ENCODE measurements at regions of chr7 and their contacts with region 1.

Region 1: DNA sequence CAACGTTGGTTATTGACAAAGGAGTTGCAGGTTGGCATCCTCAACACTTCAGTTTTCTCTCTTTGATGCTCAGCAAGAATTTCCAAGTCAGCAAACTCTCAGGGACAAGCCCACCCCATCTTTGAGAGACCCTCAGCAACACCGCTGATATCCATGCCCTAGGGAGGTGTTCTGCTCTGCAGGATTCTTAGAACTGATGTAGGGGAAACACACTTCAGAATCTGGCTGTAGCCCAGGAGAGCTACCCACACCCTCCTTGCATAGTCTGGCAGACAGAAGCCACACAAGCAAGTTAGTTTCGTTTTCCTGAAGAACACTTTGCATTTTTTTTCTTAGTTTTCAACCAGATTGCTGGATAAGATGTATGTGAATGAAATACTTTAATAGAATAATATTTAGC is 822 bp downstream of the SAMD9L start:
- DNase-seq: peak in 8 of 9 donors; percentile 30 to 51 (median 39)
- ATAC-seq: peak; percentile 76
- H3K4me3 ChIP-seq: peak overlapping the region; percentile 68
- H3K4me3 Mint-ChIP-seq: peak overlapping the region; percentile 84 to 98 (median 94)
- H3K27ac ChIP-seq: peak overlapping the region; percentile 69
- H3K27ac Mint-ChIP-seq: peak overlapping the region; percentile 86 to 96 (median 92)
- H3K4me1 ChIP-seq: peaks cover 13 to 21% of the 10 kb centered on the region in 2 donors
- H3K4me1 Mint-ChIP-seq: peaks cover 29 to 51% (median 36%) of the 10 kb centered on the region in 7 donors
- H3K27me3 ChIP-seq: no peaks in the 10 kb centered on the region
- H3K27me3 Mint-ChIP-seq: no peaks in the 10 kb centered on the region

Region 2: DNA sequence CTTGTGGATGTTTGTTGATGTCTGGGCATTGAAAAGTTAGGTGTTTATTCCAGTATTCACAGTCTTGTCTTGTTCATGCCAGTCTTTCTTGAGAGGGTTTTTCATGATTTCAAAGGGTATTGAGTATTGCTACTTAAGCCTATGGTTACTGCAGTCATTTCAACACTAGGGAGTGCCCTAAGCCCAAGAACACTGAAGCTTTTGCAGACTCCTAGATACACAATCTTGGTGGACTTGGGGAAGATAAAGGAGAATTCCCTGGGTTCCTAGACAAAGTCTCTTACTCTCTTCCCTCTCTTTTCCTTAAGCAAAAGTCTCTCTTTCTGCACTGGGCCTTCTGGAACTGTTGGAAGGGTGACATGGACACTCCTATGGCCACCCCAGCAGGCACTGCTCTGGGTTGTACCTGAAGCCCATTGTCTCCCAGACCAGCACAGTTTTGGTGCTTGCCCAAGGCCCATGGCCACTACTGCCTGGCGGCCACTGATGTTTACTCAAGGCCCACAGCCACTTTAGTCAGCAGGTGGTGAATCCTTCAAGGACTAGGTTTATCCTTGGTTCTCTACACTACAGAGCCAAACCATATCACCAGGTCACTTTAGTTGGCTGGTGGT is 54.5 kb before region 1 on chr7:
- CTCF ChIA-PET with region 1: no interaction called
- POLR2A ChIA-PET with region 1: no interaction called
- intact Hi-C with region 1: loop called in 1 of 2 experiments (anchors 10 kb)
- DNase-seq: peak in 1 of 9 donors; percentile 2
- ATAC-seq: no peak
- H3K4me3 ChIP-seq: no peak overlapping the region
- H3K4me3 Mint-ChIP-seq: no peak overlapping the region
- H3K27ac ChIP-seq: no peak overlapping the region
- H3K27ac Mint-ChIP-seq: no peak overlapping the region
- H3K4me1 ChIP-seq: no peaks in the 10 kb centered on the region
- H3K4me1 Mint-ChIP-seq: no peaks in the 10 kb centered on the region
- H3K27me3 ChIP-seq: no peaks in the 10 kb centered on the region
- H3K27me3 Mint-ChIP-seq: peaks cover 10 to 37% (median 12%) of the 10 kb centered on the region in 5 donors

Region 3: DNA sequence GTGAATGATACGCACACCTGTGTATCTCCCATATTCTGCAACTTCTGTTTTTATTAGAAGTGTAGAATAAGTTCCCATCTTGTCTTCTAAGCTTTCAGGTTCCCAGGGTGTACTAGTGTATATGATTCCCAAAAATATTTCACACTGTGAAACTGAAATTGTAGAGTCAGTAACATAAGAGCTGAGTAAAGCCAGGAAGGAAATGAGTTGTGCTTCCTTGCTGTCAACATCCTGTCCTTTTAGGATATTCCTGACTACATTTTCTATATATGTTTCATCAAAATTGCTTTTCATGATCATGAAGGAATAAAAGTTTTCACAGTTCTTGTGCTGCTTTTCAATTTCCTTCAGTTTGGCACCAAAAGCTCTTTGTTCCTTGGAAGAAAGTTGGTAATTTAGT is 14.4 kb before region 1 on chr7:
- CTCF ChIA-PET with region 1: interaction called, 3 read pairs
- POLR2A ChIA-PET with region 1: interaction called, 4 read pairs
- intact Hi-C with region 1: loop called in 1 of 2 experiments (anchors 1 kb)
- DNase-seq: no peak
- ATAC-seq: no peak
- H3K4me3 ChIP-seq: no peak overlapping the region
- H3K4me3 Mint-ChIP-seq: no peak overlapping the region
- H3K27ac ChIP-seq: no peak overlapping the region
- H3K27ac Mint-ChIP-seq: no peak overlapping the region
- H3K4me1 ChIP-seq: no peaks in the 10 kb centered on the region
- H3K4me1 Mint-ChIP-seq: no peaks in the 10 kb centered on the region
- H3K27me3 ChIP-seq: no peaks in the 10 kb centered on the region
- H3K27me3 Mint-ChIP-seq: no peaks in the 10 kb centered on the region